ENCODE measurements at regions of chr17 and their contacts with region 1.

Region 1: DNA sequence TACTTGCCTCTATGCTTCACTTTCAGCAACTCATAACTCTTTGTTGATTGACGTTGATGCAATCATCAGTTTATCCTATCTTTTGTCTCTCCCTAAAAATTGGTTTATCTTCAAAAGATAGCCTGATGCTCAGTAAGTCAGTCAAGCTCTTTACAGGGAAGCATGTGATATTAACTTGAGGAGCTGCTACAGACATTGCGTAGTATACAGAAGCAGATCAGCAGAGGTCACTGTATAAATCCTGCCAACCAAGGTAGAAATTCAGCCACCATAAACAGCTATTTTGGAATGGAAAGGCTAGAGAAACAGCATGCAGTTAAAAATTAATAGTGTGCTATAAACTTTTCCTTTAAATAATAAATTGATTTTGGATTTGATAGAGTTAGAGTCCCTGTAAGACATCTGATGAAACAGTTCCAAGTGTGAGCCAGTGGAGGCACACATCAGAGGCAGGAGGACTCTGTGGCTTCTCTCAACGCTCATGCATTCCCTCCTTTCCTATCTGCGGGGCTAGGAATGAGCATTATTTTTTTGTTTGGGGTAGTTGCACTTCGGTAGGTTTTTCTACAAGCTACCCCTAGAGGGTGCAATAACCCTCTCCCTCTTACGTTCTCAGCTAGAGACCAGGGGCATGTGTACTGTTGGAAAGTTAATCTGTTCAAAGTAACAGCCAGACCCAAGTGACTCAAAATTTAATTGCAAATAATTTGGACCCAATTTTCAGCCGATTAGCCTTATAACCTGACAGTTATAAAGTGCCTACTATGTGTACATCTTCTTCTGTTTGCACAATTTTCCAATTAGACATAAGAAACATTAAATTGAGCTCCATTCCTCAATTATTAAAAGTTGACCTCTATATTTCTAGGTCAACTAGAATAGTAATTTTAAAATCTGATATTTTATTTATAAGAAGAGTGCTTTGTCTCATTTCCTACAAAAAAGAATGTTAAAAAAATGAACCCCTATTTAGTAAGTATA is 647.7 kb upstream of the SOX9 start:
- DNase-seq: peak; percentile 22
- CTCF ChIP-seq: peak; percentile 41

Region 2: GRCh38 chr17:71460943-71461342 is 12.2 kb before region 1 on chr17:
- CTCF ChIA-PET with region 1: interaction called, 12 read pairs
- POLR2A ChIA-PET with region 1: no interaction called
- DNase-seq: no peak
- CTCF ChIP-seq: no peak